Sciatic nerve (tissue), 2 donors: ENCODE measurements at regions of chr6 and their contacts with region 1.

Region 1: GRCh38 chr6:70884074-70884983 is 72.5 kb downstream of the B3GAT2 start:
- DNase-seq: peak; percentile 71
- ATAC-seq: peak; percentile 79

Region 2: DNA sequence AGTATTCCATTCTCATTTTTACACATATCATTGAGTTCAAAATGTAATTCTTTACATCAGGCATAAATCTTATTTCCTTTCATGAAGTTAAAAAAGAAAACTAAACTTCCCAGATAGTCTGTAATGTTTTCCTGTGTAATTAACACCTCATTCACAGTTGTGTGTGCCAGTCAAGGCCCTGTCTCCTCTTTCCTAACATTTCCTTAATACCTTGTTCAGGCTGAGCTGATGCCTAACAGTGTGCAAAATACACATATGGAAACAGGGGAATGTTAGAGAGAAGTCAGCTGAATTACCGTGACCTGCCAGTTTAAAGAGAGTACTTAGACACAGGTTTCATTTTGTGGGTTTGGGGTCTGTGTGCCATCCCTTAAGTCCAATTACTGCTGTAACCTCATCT is 790.2 kb before region 1 on chr6:
- intact Hi-C with region 1: no loop called
- DNase-seq: no peak
- ATAC-seq: no peak

Region 3: DNA sequence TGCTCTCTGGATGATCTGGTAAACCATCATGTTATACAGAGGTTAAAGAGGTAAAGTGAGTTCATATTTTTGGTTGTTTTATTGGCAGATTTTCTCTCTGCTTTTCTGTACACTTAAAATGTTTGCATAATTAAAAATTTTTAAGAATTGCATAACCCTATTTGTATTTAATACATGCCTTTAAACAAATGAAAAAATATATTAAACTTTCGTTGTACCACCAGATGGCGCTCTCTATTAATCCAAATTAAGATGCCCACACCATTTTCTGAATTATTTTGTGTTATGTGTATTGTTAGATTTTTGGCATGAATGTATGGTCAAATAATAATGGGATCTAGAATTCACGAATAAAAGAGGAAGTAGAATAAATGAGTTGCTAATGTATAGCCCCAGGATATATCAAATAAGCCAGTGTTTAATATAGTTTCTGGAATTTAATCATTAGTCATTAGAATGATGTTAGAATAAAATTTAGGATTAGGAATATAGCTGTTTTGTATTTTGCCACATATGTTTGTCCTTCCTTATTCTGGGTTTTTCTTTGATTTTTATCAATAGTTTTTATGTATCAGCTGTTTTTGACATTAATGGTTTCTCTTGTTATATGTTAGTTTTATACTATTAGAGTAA is 177.7 kb before region 1 on chr6:
- intact Hi-C with region 1: loop called (anchors 5 kb)
- DNase-seq: no peak
- ATAC-seq: no peak

Region 4: DNA sequence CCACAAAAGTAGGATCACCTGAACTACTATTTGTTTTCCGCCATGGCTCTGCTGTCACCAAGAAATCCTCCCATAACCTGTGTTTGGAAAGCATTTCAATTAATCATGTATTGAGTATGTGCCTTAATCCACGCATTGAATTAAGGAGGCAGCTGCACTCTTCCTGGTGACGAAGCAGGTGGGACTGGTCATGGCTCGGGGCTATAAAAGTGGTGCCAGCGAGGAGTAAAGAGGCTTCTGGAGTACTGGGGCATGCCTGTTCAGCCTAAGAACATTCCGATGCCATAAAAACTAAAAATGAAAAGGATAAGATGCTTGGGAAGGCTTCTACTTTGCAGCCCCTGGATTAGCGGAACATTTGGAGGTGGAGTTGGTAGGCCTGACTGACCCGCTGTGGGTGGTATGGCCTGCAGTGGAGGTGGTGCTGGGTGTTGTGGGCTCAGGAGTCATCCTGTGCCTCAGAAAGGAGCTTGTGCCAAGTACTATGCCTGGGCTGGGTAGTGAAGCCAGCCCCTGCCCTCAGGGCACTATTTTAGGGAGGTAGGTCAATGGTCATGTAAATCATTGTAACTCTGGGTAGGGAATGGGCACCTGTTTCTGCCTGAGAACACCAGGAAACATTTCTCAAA is 38.0 kb before region 1 on chr6:
- intact Hi-C with region 1: loop called (anchors 1 kb)
- DNase-seq: no peak
- ATAC-seq: no peak

Region 5: GRCh38 chr6:71288228-71289001 is 404.1 kb after region 1 on chr6 and contains the start of gene OGFRL1:
- intact Hi-C with region 1: no loop called
- DNase-seq: peak; percentile 86
- ATAC-seq: peak; percentile 91
- total RNA-seq, gene OGFRL1: 61.6 TPM